ENCODE measurements at regions of chr22 and their contacts with region 1.

Region 1: GRCh38 chr22:32660292-32660691 is 141.2 kb upstream of the TIMP3 start:
- DNase-seq: peak; percentile 74
- H3K4me3 Mint-ChIP-seq: no peak overlapping the region
- H3K27ac Mint-ChIP-seq: no peak overlapping the region
- H3K4me1 Mint-ChIP-seq: peaks cover 25% of the 10 kb centered on the region
- H3K27me3 Mint-ChIP-seq: peaks cover 26% of the 10 kb centered on the region
- CTCF ChIP-seq: peak; percentile 82

Region 2: GRCh38 chr22:32622004-32622743 is 38.1 kb before region 1 on chr22:
- CTCF ChIA-PET with region 1: no interaction called
- intact Hi-C with region 1: no loop called
- DNase-seq: no peak
- H3K4me3 Mint-ChIP-seq: no peak overlapping the region
- H3K27ac Mint-ChIP-seq: no peak overlapping the region
- H3K4me1 Mint-ChIP-seq: no peaks in the 10 kb centered on the region
- H3K27me3 Mint-ChIP-seq: peaks cover 10% of the 10 kb centered on the region
- CTCF ChIP-seq: no peak

Region 3: GRCh38 chr22:32745251-32745995 is 85.1 kb after region 1 on chr22:
- CTCF ChIA-PET with region 1: no interaction called
- intact Hi-C with region 1: loop called (anchors 10 kb)
- DNase-seq: peak; percentile 71
- H3K4me3 Mint-ChIP-seq: peak overlapping the region; percentile 59
- H3K27ac Mint-ChIP-seq: peak overlapping the region; percentile 82
- H3K4me1 Mint-ChIP-seq: peaks cover 21% of the 10 kb centered on the region
- H3K27me3 Mint-ChIP-seq: no peaks in the 10 kb centered on the region
- CTCF ChIP-seq: no peak

Region 4: GRCh38 chr22:32764330-32765131 is 104.2 kb after region 1 on chr22:
- CTCF ChIA-PET with region 1: no interaction called
- intact Hi-C with region 1: no loop called
- DNase-seq: no peak
- H3K4me3 Mint-ChIP-seq: no peak overlapping the region
- H3K27ac Mint-ChIP-seq: no peak overlapping the region
- H3K4me1 Mint-ChIP-seq: peaks cover 27% of the 10 kb centered on the region
- H3K27me3 Mint-ChIP-seq: no peaks in the 10 kb centered on the region
- CTCF ChIP-seq: no peak

Region 5: DNA sequence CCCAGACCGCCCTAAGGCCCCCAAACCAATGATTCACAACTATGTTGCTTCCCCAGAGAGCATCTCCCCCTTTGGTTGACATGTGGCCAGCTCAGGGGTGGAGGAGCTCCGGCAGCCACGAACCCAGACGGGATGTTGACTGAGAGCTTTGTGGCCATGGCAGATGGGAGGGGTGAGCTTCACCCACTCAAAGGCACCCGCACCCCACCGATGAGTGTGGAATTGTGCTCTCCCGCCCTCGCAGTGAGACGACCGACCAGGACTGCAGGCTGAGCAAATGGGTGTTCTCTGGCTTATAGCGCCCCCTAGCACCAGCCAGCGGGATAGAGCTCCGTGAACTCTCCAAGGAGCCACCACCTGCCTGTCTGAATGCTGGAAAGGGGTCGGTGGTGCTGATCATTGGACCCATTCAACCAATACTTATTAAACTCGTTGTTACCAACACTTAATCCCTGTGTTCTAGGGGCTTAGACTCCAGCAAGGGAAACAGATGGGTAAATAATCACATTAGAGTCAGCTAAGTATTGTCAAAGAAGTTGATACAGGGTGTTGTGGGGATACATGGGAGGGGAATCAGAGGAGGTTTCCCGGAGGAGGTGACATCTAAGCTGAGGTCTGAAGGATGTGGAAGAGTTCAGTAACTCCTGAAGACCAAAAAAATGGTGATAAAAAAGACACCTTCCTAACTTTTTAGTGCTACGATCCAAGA is 136.7 kb after region 1 on chr22:
- CTCF ChIA-PET with region 1: interaction called, 72 read pairs
- intact Hi-C with region 1: loop called (anchors 1 kb)
- DNase-seq: peak; percentile 71
- H3K4me3 Mint-ChIP-seq: no peak overlapping the region
- H3K27ac Mint-ChIP-seq: no peak overlapping the region
- H3K4me1 Mint-ChIP-seq: no peaks in the 10 kb centered on the region
- H3K27me3 Mint-ChIP-seq: peaks cover 31% of the 10 kb centered on the region
- CTCF ChIP-seq: peak; percentile 92

Region 6: GRCh38 chr22:32985899-32986765 is 325.8 kb after region 1 on chr22:
- CTCF ChIA-PET with region 1: interaction called, 4 read pairs
- intact Hi-C with region 1: loop called (anchors 10 kb)
- DNase-seq: peak; percentile 79
- H3K4me3 Mint-ChIP-seq: no peak overlapping the region
- H3K27ac Mint-ChIP-seq: no peak overlapping the region
- H3K4me1 Mint-ChIP-seq: peaks cover 6% of the 10 kb centered on the region
- H3K27me3 Mint-ChIP-seq: peaks cover 14% of the 10 kb centered on the region
- CTCF ChIP-seq: peak; percentile 70

Measured in Calu3 (cell line).